ENCODE measurements at regions of chr12 and their contacts with region 1.

Region 1: DNA sequence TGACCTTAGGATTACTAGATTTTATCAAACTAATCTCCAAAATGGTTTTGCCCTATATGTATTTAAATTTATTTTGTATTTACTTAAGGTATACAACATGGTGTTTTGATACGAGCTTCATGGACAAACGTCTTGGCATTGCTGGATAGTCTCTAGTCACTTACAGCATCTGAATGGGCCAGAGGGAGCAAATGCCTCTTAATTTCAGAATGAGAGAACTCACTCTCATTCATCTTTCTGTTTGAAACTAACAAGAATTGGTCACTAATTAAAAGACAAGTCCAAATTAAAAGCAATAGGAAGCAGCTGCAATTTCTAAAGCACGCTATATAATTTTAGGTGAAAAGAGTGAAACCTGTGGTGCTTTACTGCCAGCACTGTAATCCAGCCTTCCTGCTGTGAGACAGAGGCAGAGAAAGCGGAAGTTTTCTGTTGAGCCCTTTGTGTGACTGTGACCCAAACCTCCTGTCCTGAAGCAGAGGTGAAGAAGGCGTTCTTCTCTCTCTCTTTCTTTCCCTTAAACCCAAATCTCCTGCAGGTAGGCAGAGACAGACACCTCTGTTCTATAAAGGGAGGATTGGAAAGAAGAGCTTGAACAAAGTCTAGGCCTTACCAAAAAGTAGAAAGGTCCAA is 184.6 kb upstream of the NAV3 start:
- DNase-seq: no peak
- ATAC-seq: no peak
- H3K4me3 ChIP-seq: no peak overlapping the region
- H3K4me3 Mint-ChIP-seq: no peak overlapping the region
- H3K27ac ChIP-seq: no peak overlapping the region
- H3K27ac Mint-ChIP-seq: no peak overlapping the region
- H3K4me1 ChIP-seq: no peaks in the 10 kb centered on the region
- H3K4me1 Mint-ChIP-seq: no peaks in the 10 kb centered on the region
- H3K27me3 ChIP-seq: no peaks in the 10 kb centered on the region
- H3K27me3 Mint-ChIP-seq: no peaks in the 10 kb centered on the region
- CTCF ChIP-seq: no peak

Region 2: GRCh38 chr12:77560714-77561113 is 85.4 kb before region 1 on chr12:
- CTCF ChIA-PET with region 1: no interaction called
- POLR2A ChIA-PET with region 1: no interaction called
- intact Hi-C with region 1: no loop called
- DNase-seq: peak in 1 of 9 experiments; percentile 1
- ATAC-seq: no peak
- H3K4me3 ChIP-seq: no peak overlapping the region
- H3K4me3 Mint-ChIP-seq: no peak overlapping the region
- H3K27ac ChIP-seq: no peak overlapping the region
- H3K27ac Mint-ChIP-seq: no peak overlapping the region
- H3K4me1 ChIP-seq: no peaks in the 10 kb centered on the region
- H3K4me1 Mint-ChIP-seq: no peaks in the 10 kb centered on the region
- H3K27me3 ChIP-seq: no peaks in the 10 kb centered on the region
- H3K27me3 Mint-ChIP-seq: no peaks in the 10 kb centered on the region
- CTCF ChIP-seq: no peak

Region 3: GRCh38 chr12:77979597-77980250 is 333.6 kb after region 1 on chr12:
- CTCF ChIA-PET with region 1: no interaction called
- POLR2A ChIA-PET with region 1: no interaction called
- intact Hi-C with region 1: no loop called
- DNase-seq: no peak
- ATAC-seq: no peak
- H3K4me3 ChIP-seq: no peak overlapping the region
- H3K4me3 Mint-ChIP-seq: no peak overlapping the region
- H3K27ac ChIP-seq: no peak overlapping the region
- H3K27ac Mint-ChIP-seq: no peak overlapping the region
- H3K4me1 ChIP-seq: no peaks in the 10 kb centered on the region
- H3K4me1 Mint-ChIP-seq: no peaks in the 10 kb centered on the region
- H3K27me3 ChIP-seq: no peaks in the 10 kb centered on the region
- H3K27me3 Mint-ChIP-seq: no peaks in the 10 kb centered on the region
- CTCF ChIP-seq: no peak

Region 4: GRCh38 chr12:78951803-78952538 is 1305.9 kb after region 1 on chr12:
- CTCF ChIA-PET with region 1: no interaction called
- POLR2A ChIA-PET with region 1: no interaction called
- intact Hi-C with region 1: loop called in 1 of 2 experiments (anchors 5 kb)
- DNase-seq: no peak
- ATAC-seq: no peak
- H3K4me3 ChIP-seq: no peak overlapping the region
- H3K4me3 Mint-ChIP-seq: no peak overlapping the region
- H3K27ac ChIP-seq: no peak overlapping the region
- H3K27ac Mint-ChIP-seq: no peak overlapping the region
- H3K4me1 ChIP-seq: no peaks in the 10 kb centered on the region
- H3K4me1 Mint-ChIP-seq: no peaks in the 10 kb centered on the region
- H3K27me3 ChIP-seq: no peaks in the 10 kb centered on the region
- H3K27me3 Mint-ChIP-seq: no peaks in the 10 kb centered on the region
- CTCF ChIP-seq: no peak